ENCODE measurements at regions of chr16 and their contacts with region 1.

Region 1: GRCh38 chr16:31713071-31713944 is 160.3 kb upstream of the ZNF267 start:
- DNase-seq: peak; percentile 81 to 94 (median 88)
- ATAC-seq: peak; percentile 82
- H3K4me3 ChIP-seq: peak overlapping the region; percentile 93
- H3K4me3 Mint-ChIP-seq: peak overlapping the region; percentile 100
- H3K27ac ChIP-seq: peak overlapping the region; percentile 83 to 87
- H3K27ac Mint-ChIP-seq: peak overlapping the region; percentile 96
- H3K4me1 ChIP-seq: peaks cover 33% of the 10 kb centered on the region
- H3K4me1 Mint-ChIP-seq: peaks cover 80% of the 10 kb centered on the region
- H3K27me3 ChIP-seq: no peaks in the 10 kb centered on the region
- H3K27me3 Mint-ChIP-seq: no peaks in the 10 kb centered on the region
- CTCF ChIP-seq: no peak

Region 2: DNA sequence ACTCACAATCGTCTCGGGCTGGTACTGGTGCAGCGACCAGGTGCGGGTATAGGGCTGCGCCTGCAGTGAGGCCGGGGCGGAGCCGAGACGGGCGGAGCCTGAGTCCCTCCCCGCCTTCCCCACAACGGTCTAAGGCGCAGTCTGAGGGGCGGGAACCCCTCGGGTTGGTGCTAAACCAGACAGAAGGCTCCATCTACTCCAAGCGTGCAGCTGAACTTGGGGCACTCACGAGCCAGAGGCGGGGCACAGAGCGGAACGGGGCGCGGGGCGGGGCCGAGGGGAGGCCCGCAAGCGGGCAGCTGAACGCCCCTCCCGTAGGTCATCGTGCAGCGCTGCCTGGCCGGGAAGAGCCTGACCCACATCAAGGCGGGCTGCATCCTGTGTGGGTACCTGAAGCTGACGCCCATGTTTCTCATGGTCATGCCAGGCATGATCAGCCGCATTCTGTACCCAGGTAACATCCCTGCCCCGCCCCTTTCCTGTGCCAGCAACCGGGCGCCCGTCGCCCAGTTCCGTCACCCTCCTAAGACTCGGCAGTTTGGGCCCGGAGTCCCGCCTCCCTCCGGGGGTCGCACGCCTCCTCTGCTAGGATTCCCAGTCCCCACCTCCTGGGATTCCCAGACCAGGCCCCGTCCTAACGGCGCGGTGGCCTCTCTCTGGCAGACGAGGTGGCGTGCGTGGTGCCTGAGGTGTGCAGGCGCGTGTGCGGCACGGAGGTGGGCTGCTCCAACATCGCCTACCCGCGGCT is 225.4 kb before region 1 on chr16:
- CTCF ChIA-PET with region 1: no interaction called
- POLR2A ChIA-PET with region 1: interaction called, 5 read pairs
- intact Hi-C with region 1: loop called in 1 of 2 experiments (anchors 10 kb)
- DNase-seq: peak; percentile 60 to 93 (median 74)
- ATAC-seq: peak; percentile 86
- H3K4me3 ChIP-seq: peak overlapping the region; percentile 89
- H3K4me3 Mint-ChIP-seq: peak overlapping the region; percentile 92
- H3K27ac ChIP-seq: peak overlapping the region; percentile 45 to 51
- H3K27ac Mint-ChIP-seq: peak overlapping the region; percentile 91
- H3K4me1 ChIP-seq: peaks cover 27% of the 10 kb centered on the region
- H3K4me1 Mint-ChIP-seq: peaks cover 13% of the 10 kb centered on the region
- H3K27me3 ChIP-seq: no peaks in the 10 kb centered on the region
- H3K27me3 Mint-ChIP-seq: no peaks in the 10 kb centered on the region
- CTCF ChIP-seq: no peak

Region 3: GRCh38 chr16:31695667-31696066 is 17.6 kb before region 1 on chr16:
- CTCF ChIA-PET with region 1: interaction called, 4 read pairs
- POLR2A ChIA-PET with region 1: interaction called, 75 read pairs
- intact Hi-C with region 1: loop called in 1 of 2 experiments (anchors 2 kb)
- DNase-seq: peak in 12 of 14 experiments; percentile 27 to 93 (median 53)
- ATAC-seq: peak; percentile 94
- H3K4me3 ChIP-seq: no peak overlapping the region
- H3K4me3 Mint-ChIP-seq: no peak overlapping the region
- H3K27ac ChIP-seq: peak overlapping the region in 1 of 2 donors; percentile 50
- H3K27ac Mint-ChIP-seq: no peak overlapping the region
- H3K4me1 ChIP-seq: peaks cover 31% of the 10 kb centered on the region
- H3K4me1 Mint-ChIP-seq: peaks cover 14% of the 10 kb centered on the region
- H3K27me3 ChIP-seq: no peaks in the 10 kb centered on the region
- H3K27me3 Mint-ChIP-seq: no peaks in the 10 kb centered on the region
- CTCF ChIP-seq: no peak